H1 (cell line): ENCODE measurements at regions of chr6 and their contacts with region 1.

Region 1: DNA sequence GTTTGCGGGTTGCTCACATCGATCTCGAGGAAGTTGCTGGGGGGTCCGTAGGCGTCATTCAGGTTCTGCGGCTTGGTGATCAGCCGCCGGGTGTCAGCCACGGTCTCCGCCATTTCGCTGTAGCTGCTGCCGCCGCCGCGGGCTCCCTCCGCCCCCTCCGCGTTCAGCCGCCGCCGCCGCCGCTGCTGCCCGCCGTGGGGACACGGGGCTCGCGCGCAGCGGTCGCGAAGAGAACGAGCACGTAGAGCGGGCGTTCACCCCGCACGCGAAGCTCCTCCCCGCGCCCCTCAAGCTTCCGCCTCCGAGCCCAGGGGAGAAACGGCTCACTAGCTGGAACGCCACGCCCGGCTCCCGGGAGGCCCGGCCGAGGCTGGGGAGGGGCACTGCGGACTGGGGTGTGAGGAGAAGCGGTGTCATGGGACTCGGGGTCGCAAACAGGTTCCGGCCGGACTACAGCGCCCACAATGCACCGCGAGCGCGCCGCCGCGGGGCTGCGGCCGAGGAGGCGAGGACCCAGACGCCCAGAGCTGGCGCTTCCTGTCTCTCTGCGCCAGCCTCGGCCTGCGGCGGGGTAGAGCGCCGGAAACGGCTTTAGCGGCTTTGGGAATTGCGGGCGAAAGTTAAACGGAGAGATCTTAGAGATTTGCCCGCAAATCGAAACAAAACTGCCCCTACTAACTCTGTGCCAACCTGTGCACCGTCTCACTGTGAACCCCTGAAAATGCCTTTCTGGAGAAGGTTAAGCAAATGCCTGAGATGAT is at the start of gene SNX3:
- DNase-seq: peak; percentile 86 to 95
- H3K4me3 ChIP-seq: peak within 1 kb of the TSS; percentile 60 to 81 (median 72)
- H3K27ac ChIP-seq: peak within 1 kb of the TSS; percentile 69
- H3K4me1 ChIP-seq: peaks cover 0 to 3% (median 1%) of the 10 kb centered on the region in 4 experiments; a peak in 3 of 7 replicates
- H3K27me3 ChIP-seq: no peaks in the 10 kb centered on the region
- CTCF ChIP-seq: peak in 2 of 3 experiments; percentile 2 to 27; a peak in 3 of 4 replicates
- EP300 ChIP-seq: peak in 1 of 2 experiments; percentile 25; a peak in 1 of 3 replicates
- POLR2A ChIP-seq: peak; percentile 33 to 78
- RAD21 ChIP-seq: peak in 1 of 2 experiments; percentile 23; a peak in 1 of 4 replicates
- total RNA-seq, gene SNX3: 72.5 and 72.7 TPM in 2 replicates

Region 2: DNA sequence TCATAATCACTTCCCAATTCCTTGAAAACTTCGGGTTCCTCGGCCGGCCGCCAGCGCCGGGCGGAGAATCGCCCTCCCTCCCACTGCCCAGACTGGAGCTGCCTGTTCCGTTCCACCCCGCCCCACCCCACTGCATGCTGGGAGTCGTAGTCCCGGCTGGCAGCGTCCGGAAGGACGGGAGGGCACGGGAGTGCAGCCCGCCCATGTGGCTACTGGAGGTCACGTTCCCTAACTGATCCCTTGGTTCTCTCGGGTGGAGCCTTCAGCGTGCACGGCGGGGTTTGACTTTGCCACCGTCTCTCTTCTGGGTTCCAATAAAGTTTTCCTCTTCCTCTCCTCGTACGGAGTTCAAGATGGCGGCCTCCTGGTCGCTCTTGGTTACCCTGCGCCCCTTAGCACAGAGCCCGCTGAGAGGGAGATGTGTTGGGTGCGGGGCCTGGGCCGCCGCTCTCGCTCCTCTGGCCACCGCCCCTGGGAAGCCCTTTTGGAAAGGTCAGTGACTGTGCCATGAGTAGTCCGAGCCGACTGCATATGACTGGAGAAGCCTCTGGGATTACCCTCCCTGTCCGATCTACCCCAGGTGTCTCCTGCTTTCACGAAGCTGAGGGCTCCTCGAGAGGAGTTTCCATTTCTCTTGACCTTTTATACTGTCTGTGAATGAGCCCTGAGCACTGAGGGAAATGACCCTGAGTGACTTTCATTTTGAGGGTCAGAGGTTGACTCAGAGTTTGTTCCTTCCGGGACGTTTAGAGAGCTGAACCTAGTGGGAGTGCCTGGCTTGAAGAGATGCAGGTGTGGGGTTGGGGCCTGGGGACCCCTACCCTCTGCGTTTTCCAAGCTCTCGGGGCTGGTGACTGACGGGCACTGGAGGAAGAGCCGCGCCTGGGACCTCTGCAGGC is 34.0 kb after region 1 on chr6 and contains the start of gene AFG1L:
- CTCF ChIA-PET with region 1: no interaction called
- POLR2A ChIA-PET with region 1: interaction called, 19 read pairs
- DNase-seq: peak; percentile 79 to 94
- H3K4me3 ChIP-seq: peak within 1 kb of the TSS; percentile 74 to 94 (median 84)
- H3K27ac ChIP-seq: peak within 1 kb of the TSS; percentile 93
- H3K4me1 ChIP-seq: 0 out of 7 replicates have a peak, but pooled peaks cover 0 to 2% (median 0%) of the 10 kb centered on the region in 4 experiments
- H3K27me3 ChIP-seq: no peaks in the 10 kb centered on the region
- CTCF ChIP-seq: no peak
- EP300 ChIP-seq: no peak
- POLR2A ChIP-seq: peak; percentile 63 to 73
- RAD21 ChIP-seq: no peak; a peak in 1 of 4 replicates
- total RNA-seq, gene AFG1L: 5.7 and 7.8 TPM in 2 replicates